Common myeloid progenitor, CD34-positive (primary cell): ENCODE measurements at regions of chr5 and their contacts with region 1.

Region 1: GRCh38 chr5:119315516-119315949 is 40.3 kb upstream of the TNFAIP8 start:
- DNase-seq: peak; percentile 59 to 76 (median 67)
- H3K4me3 ChIP-seq: no peak overlapping the region
- H3K27ac ChIP-seq: peak overlapping the region in 1 of 2 experiments; percentile 15
- H3K4me1 ChIP-seq: peaks cover 18 to 64% (median 41%) of the 10 kb centered on the region in 4 experiments
- H3K27me3 ChIP-seq: no peaks in the 10 kb centered on the region

Region 2: DNA sequence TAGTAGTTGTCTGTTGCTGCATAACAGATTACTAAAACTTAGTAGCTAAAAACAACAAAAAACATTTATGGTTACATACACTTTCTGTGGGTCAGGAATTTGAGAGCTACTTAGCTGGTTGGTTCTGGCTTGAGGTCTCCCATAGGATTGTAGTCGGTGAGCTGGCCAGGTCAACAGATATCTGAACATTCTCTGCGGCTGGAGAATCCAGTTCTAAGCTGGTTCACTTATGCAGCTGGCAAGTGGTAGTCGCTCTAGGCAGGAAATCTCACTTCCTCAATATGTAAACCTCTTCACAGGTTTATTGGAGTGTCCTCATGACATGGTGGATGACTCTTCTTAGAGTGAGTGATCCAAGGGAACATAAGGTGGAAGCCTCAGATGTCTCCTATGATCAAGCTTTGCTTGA is 25.4 kb before region 1 on chr5:
- CTCF ChIA-PET with region 1: interaction called, 10 read pairs
- POLR2A ChIA-PET with region 1: interaction called, 4 read pairs
- DNase-seq: peak; percentile 36 to 89 (median 83)
- H3K4me3 ChIP-seq: peak overlapping the region in 1 of 7 experiments; percentile 39
- H3K27ac ChIP-seq: no peak overlapping the region
- H3K4me1 ChIP-seq: peaks cover 43 to 59% (median 51%) of the 10 kb centered on the region in 4 experiments
- H3K27me3 ChIP-seq: no peaks in the 10 kb centered on the region

Region 3: GRCh38 chr5:119302916-119303897 is 12.3 kb before region 1 on chr5:
- CTCF ChIA-PET with region 1: interaction called, 10 read pairs
- POLR2A ChIA-PET with region 1: no interaction called
- DNase-seq: no peak
- H3K4me3 ChIP-seq: no peak overlapping the region
- H3K27ac ChIP-seq: peak overlapping the region in 1 of 2 experiments; percentile 51
- H3K4me1 ChIP-seq: peaks cover 40 to 52% (median 45%) of the 10 kb centered on the region in 4 experiments
- H3K27me3 ChIP-seq: no peaks in the 10 kb centered on the region

Region 4: DNA sequence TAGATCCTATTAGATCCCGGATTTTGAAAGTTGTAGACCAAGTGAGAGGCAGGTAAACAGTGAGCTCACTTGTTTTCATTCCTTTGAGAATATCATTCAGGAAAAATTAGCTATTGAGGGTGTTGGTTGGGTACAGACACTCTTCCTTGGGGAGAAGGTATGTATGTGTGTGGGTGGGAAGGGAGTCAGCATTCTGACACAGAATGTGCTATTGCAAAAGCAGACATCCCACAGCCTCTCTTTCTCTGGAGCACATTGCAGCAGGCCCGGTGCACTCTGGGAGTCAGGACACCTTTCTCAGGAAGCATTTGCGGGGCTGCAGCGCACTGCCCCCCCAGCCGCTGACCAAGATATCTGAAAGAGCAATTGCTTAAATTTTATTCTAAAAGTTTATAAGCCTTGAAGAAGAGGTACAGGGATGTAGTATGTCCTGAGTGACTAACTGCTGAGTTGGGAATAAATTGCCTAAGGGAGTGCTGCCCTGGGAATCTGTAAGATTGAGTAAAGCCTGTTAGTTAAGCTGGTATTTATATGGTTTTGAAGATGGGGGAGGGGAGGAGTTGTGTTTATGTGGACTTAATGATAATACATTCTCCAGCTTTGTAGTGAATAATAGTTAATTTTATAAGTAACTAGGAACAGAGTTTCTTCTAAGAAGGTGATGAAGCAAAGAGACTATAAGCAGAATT is 45.5 kb after region 1 on chr5:
- CTCF ChIA-PET with region 1: interaction called, 10 read pairs
- POLR2A ChIA-PET with region 1: no interaction called
- DNase-seq: no peak
- H3K4me3 ChIP-seq: no peak overlapping the region
- H3K27ac ChIP-seq: no peak overlapping the region
- H3K4me1 ChIP-seq: peaks cover 6 to 50% (median 27%) of the 10 kb centered on the region in 4 experiments
- H3K27me3 ChIP-seq: no peaks in the 10 kb centered on the region

Region 5: GRCh38 chr5:119458911-119459632 is 143.5 kb after region 1 on chr5:
- CTCF ChIA-PET with region 1: no interaction called
- POLR2A ChIA-PET with region 1: no interaction called
- DNase-seq: no peak
- H3K4me3 ChIP-seq: no peak overlapping the region
- H3K27ac ChIP-seq: no peak overlapping the region
- H3K4me1 ChIP-seq: peaks cover 0 to 11% (median 3%) of the 10 kb centered on the region in 4 experiments
- H3K27me3 ChIP-seq: no peaks in the 10 kb centered on the region